HepG2 (cell line): ENCODE measurements at regions of chr6 and their contacts with region 1.

Region 1: DNA sequence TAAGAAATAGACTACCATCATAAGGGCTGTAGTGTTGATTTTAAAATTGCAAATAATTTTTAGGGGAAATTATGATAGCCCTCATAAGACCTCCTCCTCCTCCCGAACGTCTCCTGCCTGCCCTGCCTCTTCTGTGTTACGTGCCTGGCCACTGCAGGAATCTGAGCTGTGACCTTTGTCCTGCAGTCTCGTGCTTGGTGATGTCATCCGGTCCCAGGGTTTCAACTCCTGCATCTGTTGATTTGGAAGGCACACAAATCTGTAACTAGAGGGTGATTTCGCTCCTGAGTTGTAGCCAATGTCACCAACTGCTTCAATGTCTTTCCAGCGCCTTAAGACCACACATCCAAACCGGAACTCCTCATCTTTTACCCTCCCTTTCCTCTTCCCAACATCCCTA is 163.2 kb downstream of the AIG1 start:
- DNase-seq: peak; percentile 81
- ATAC-seq: peak; percentile 92
- H3K4me3 ChIP-seq: no peak overlapping the region
- H3K27ac ChIP-seq: no peak overlapping the region
- H3K4me1 ChIP-seq: peaks cover 17% of the 10 kb centered on the region
- H3K27me3 ChIP-seq: no peaks in the 10 kb centered on the region
- CTCF ChIP-seq: no peak
- EP300 ChIP-seq: peak in 1 of 2 experiments; percentile 59; a peak in 2 of 4 replicates
- POLR2A ChIP-seq: no peak
- RAD21 ChIP-seq: no peak

Region 2: DNA sequence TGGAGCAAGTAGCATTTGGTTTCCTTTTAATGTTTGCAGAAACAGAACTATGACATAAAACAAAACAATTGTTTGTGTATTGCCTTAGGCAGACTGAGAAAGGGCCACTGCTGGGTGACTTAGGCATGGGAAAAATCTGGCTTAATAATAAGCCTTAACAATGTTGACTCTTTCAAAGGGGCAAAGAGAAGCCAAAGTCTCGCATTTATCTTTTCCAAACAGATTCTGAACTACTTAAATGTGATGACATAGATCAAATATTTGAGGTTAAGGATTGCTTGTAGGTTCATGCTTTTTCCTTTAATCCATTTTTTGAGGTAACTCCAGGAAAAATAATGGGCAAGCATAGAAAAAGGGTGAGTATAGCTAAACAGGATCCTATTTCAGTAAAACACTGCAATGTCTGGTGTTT is 187.0 kb after region 1 on chr6:
- CTCF ChIA-PET with region 1: no interaction called
- POLR2A ChIA-PET with region 1: no interaction called
- in situ Hi-C with region 1: no loop called
- intact Hi-C with region 1: loop called (anchors 5 kb)
- DNase-seq: peak; percentile 95
- ATAC-seq: peak; percentile 75
- H3K4me3 ChIP-seq: no peak overlapping the region; a peak in 1 of 6 replicates
- H3K27ac ChIP-seq: peak overlapping the region; percentile 53
- H3K4me1 ChIP-seq: peaks cover 64% of the 10 kb centered on the region
- H3K27me3 ChIP-seq: no peaks in the 10 kb centered on the region
- CTCF ChIP-seq: no peak
- EP300 ChIP-seq: peak in 1 of 2 experiments; percentile 97; a peak in 2 of 4 replicates
- POLR2A ChIP-seq: no peak
- RAD21 ChIP-seq: no peak